ENCODE measurements at regions of chr18 and their contacts with region 1.

Region 1: GRCh38 chr18:74623047-74623816 is 25.6 kb downstream of the ZNF407 start:
- DNase-seq: peak in 1 of 2 experiments; percentile 8
- H3K4me3 ChIP-seq: no peak overlapping the region
- H3K27ac ChIP-seq: no peak overlapping the region
- H3K4me1 ChIP-seq: no peaks in the 10 kb centered on the region
- H3K27me3 ChIP-seq: no peaks in the 10 kb centered on the region
- CTCF ChIP-seq: peak; percentile 69

Region 2: DNA sequence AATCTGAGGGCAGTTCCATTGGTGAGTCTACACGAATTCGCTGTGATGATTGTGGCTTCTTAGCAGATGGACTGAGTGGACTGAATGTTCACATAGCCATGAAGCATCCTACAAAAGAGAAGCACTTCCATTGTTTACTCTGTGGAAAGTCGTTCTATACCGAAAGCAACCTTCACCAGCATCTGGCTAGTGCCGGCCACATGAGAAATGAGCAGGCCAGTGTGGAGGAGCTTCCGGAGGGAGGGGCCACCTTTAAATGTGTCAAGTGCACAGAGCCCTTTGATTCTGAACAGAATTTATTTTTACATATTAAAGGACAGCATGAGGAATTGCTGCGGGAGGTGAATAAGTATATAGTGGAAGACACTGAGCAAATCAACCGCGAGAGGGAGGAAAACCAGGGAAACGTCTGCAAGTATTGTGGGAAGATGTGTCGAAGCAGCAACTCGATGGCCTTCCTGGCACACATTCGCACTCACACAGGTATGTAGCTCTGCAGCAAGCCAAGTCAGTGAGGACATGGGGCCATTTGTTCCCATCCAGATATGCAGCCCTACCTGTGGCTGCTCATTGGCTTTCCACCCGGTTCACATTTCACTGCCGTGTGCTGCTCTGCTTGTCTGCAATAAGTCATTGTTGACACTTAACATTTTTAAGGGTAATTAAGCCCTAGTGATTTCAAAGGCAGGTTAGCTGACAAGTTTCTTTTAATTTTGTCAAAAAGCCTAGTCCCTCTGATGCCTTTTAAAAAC is 12.2 kb after region 1 on chr18:
- CTCF ChIA-PET with region 1: no interaction called
- POLR2A ChIA-PET with region 1: no interaction called
- intact Hi-C with region 1: no loop called
- DNase-seq: no peak
- H3K4me3 ChIP-seq: no peak overlapping the region
- H3K27ac ChIP-seq: no peak overlapping the region
- H3K4me1 ChIP-seq: no peaks in the 10 kb centered on the region
- H3K27me3 ChIP-seq: no peaks in the 10 kb centered on the region
- CTCF ChIP-seq: no peak

Region 3: GRCh38 chr18:74731097-74731496 is 107.9 kb after region 1 on chr18:
- CTCF ChIA-PET with region 1: no interaction called
- POLR2A ChIA-PET with region 1: no interaction called
- intact Hi-C with region 1: no loop called
- DNase-seq: peak in 1 of 2 experiments; percentile 16
- H3K4me3 ChIP-seq: no peak overlapping the region
- H3K27ac ChIP-seq: no peak overlapping the region
- H3K4me1 ChIP-seq: no peaks in the 10 kb centered on the region
- H3K27me3 ChIP-seq: no peaks in the 10 kb centered on the region
- CTCF ChIP-seq: no peak

Region 4: GRCh38 chr18:74849301-74849700 is 226.1 kb after region 1 on chr18:
- CTCF ChIA-PET with region 1: interaction called, 15 read pairs
- POLR2A ChIA-PET with region 1: no interaction called
- intact Hi-C with region 1: no loop called
- DNase-seq: no peak
- H3K4me3 ChIP-seq: no peak overlapping the region
- H3K27ac ChIP-seq: no peak overlapping the region
- H3K4me1 ChIP-seq: no peaks in the 10 kb centered on the region
- H3K27me3 ChIP-seq: no peaks in the 10 kb centered on the region
- CTCF ChIP-seq: no peak

Measured in PC-9 (cell line).